Activated CD8-positive, alpha-beta T cell treated with anti-CD3 and anti-CD28 coated beads, Interleukin-2, amount 10 ng/mL, durations not matched to agents 7 days and 5 days (primary cell): ENCODE measurements at regions of chr1 and their contacts with region 1.

Region 1: DNA sequence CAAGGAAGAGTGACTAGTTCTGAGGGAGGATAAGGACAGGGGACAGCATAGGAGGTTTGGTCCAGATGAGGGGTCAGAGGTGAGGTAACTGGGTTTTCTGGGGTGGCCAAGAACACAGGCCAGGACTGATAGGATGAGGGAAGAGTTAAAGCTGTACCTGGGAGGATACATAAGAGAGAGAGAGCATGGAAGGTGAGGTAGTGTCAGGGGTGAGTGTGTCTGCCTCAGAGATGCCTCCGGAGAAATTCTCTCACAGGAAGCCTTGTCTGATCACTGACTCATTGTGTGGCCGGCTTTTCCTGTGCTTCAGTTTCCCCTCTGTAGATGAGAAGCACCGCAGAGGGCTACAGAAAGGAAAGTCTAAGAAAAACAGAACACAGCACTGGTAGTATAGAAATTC is 40.2 kb downstream of the FASLG start:
- DNase-seq: peak; percentile 86
- ATAC-seq: peak; percentile 85
- H3K4me3 Mint-ChIP-seq: peak overlapping the region; percentile 55
- H3K27ac Mint-ChIP-seq: peak overlapping the region; percentile 96
- H3K4me1 Mint-ChIP-seq: no peaks in the 10 kb centered on the region
- H3K27me3 Mint-ChIP-seq: no peaks in the 10 kb centered on the region

Region 2: DNA sequence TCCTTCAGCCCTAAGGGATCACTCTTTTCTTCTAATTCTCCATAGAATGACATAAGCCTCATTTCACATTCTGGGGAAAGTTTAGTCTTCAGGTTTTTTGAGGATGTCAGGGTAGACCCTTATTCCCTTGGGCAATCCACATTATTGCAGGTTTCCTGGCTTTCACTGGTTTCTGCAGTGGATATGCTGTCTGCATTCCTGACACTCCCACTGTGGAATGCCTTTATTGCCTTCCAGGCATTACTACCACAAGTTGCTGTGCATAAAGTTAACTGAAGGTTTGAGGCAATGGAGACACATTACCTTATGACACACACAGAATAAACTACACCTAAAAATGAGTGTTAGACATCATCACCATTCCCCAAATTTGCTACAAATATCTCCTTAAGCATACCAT is 27.5 kb before region 1 on chr1:
- CTCF ChIA-PET with region 1: interaction called, 10 read pairs
- POLR2A ChIA-PET with region 1: interaction called, 6 read pairs
- DNase-seq: no peak
- ATAC-seq: no peak
- H3K4me3 Mint-ChIP-seq: no peak overlapping the region
- H3K27ac Mint-ChIP-seq: peak overlapping the region; percentile 25
- H3K4me1 Mint-ChIP-seq: peaks cover 89% of the 10 kb centered on the region
- H3K27me3 Mint-ChIP-seq: no peaks in the 10 kb centered on the region

Region 3: DNA sequence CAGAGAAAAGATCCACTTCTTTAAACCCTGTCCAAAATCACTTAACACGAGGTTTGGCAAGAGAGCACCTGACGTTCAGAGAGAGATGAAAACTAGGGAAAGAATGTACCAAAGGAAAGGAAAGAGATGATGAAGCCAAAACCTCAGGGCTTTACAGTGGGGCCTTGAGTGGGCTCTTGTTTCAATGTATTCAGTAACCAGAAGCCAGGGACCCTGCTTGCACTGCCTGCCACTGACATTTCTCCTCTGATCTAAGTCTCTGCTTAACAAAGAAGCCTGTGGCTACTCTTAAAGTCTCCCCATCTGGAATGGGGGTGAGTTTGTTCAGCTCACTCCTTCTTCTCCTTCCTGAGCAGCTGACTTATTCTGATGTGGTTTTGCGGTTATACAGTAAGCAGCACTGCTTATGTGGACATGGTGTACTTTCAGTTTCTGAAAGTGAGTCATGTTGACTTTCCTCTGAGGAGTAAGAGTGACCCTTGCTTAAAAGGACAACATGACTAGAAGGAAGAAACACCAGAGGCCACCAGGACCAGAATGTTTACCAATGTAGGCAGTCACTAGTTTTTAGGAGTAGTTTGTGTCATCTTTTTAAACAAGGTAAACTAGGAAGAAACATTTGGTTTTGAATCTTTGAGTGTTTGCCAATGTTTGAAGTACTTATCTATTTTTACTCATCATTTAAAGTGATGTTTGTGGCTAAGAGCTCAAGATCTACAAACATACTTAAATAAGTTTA is 47.1 kb after region 1 on chr1:
- CTCF ChIA-PET with region 1: no interaction called
- POLR2A ChIA-PET with region 1: no interaction called
- DNase-seq: peak; percentile 65
- ATAC-seq: peak; percentile 91
- H3K4me3 Mint-ChIP-seq: peak overlapping the region; percentile 18
- H3K27ac Mint-ChIP-seq: peak overlapping the region; percentile 44
- H3K4me1 Mint-ChIP-seq: peaks cover 44% of the 10 kb centered on the region
- H3K27me3 Mint-ChIP-seq: peaks cover 16% of the 10 kb centered on the region